ENCODE measurements at regions of chr4 and their contacts with region 1.

Region 1: DNA sequence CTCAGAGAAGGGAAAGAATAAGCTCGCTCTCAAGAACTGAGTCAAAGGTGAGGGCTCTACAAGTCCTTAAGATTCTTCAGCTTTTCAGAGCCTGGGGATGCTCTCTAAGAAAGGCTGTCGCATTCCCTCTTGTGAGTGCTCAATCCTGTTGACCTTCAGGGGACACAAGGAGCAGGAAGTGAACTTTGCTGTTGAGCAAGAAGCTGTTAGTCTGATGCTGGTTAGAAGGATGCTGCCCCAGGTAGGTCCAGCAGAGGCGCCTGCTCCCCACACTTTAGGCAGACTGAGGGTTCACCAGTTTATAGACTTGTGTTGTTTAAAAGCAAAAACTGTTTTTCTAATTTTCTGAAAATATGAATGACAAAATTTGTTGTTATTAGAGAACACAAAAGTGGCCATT is 125.4 kb upstream of the SPOCK3 start:
- DNase-seq: no peak
- ATAC-seq: no peak
- H3K4me3 Mint-ChIP-seq: no peak overlapping the region
- H3K27ac Mint-ChIP-seq: no peak overlapping the region
- H3K4me1 Mint-ChIP-seq: no peaks in the 10 kb centered on the region
- H3K27me3 Mint-ChIP-seq: no peaks in the 10 kb centered on the region

Region 2: GRCh38 chr4:167000141-167000852 is 359.4 kb before region 1 on chr4:
- CTCF ChIA-PET with region 1: no interaction called
- POLR2A ChIA-PET with region 1: no interaction called
- intact Hi-C with region 1: no loop called
- DNase-seq: no peak
- ATAC-seq: no peak
- H3K4me3 Mint-ChIP-seq: no peak overlapping the region
- H3K27ac Mint-ChIP-seq: no peak overlapping the region
- H3K4me1 Mint-ChIP-seq: no peaks in the 10 kb centered on the region
- H3K27me3 Mint-ChIP-seq: no peaks in the 10 kb centered on the region

Region 3: GRCh38 chr4:167321299-167321698 is 38.4 kb before region 1 on chr4:
- CTCF ChIA-PET with region 1: no interaction called
- POLR2A ChIA-PET with region 1: no interaction called
- intact Hi-C with region 1: loop called in 1 of 2 experiments (anchors 1 kb)
- DNase-seq: no peak
- ATAC-seq: no peak
- H3K4me3 Mint-ChIP-seq: no peak overlapping the region
- H3K27ac Mint-ChIP-seq: no peak overlapping the region
- H3K4me1 Mint-ChIP-seq: no peaks in the 10 kb centered on the region
- H3K27me3 Mint-ChIP-seq: no peaks in the 10 kb centered on the region

Region 4: DNA sequence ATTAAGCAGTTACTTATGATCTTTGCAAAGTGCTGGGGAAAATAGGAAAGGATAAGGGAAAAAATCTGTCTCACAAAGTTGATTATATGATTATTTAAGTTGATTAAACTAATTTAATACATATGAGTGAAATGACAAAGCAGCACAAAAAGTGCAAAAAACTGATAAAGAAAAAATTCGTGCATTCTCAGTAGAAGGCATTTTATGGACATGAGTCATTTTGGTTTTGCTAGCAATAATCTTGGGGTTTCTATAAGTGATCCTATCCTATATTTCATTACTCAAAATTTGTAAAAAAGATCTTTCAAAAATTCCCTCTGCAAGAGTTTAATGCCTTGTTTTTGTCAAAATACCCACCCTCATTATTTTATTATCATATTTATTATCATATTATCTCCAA is 508.5 kb after region 1 on chr4:
- CTCF ChIA-PET with region 1: no interaction called
- POLR2A ChIA-PET with region 1: no interaction called
- intact Hi-C with region 1: no loop called
- DNase-seq: no peak
- ATAC-seq: no peak
- H3K4me3 Mint-ChIP-seq: no peak overlapping the region
- H3K27ac Mint-ChIP-seq: no peak overlapping the region
- H3K4me1 Mint-ChIP-seq: no peaks in the 10 kb centered on the region
- H3K27me3 Mint-ChIP-seq: no peaks in the 10 kb centered on the region

Region 5: GRCh38 chr4:168119890-168120289 is 760.2 kb after region 1 on chr4:
- CTCF ChIA-PET with region 1: no interaction called
- POLR2A ChIA-PET with region 1: no interaction called
- intact Hi-C with region 1: no loop called
- DNase-seq: no peak
- ATAC-seq: no peak
- H3K4me3 Mint-ChIP-seq: no peak overlapping the region
- H3K27ac Mint-ChIP-seq: no peak overlapping the region
- H3K4me1 Mint-ChIP-seq: no peaks in the 10 kb centered on the region
- H3K27me3 Mint-ChIP-seq: peaks cover 8% of the 10 kb centered on the region